Heart left ventricle (tissue), 16 donors: ENCODE measurements at regions of chr14 and their contacts with region 1.

Region 1: GRCh38 chr14:103104654-103105452 is 10.3 kb downstream of the EXOC3L4 start:
- DNase-seq: peak; percentile 64 to 88 (median 68)
- ATAC-seq: peak; percentile 69 to 81 (median 76)
- H3K4me3 ChIP-seq: no peak overlapping the region
- H3K27ac ChIP-seq: no peak overlapping the region
- H3K4me1 ChIP-seq: peaks cover 0 to 35% (median 24%) of the 10 kb centered on the region in 12 donors
- H3K27me3 ChIP-seq: peaks cover 17 to 54% (median 43%) of the 10 kb centered on the region in 9 donors
- CTCF ChIP-seq: peak; percentile 88 to 98 (median 94)
- POLR2A ChIP-seq: peak in 1 of 2 donors; percentile 17

Region 2: GRCh38 chr14:103141119-103141796 is 36.4 kb after region 1 on chr14:
- intact Hi-C with region 1: loop called in 6 of 10 experiments (anchors 2 to 5 kb)
- DNase-seq: no peak
- ATAC-seq: no peak
- H3K4me3 ChIP-seq: no peak overlapping the region
- H3K27ac ChIP-seq: no peak overlapping the region
- H3K4me1 ChIP-seq: peaks cover 0 to 35% (median 16%) of the 10 kb centered on the region in 12 donors
- H3K27me3 ChIP-seq: peaks cover 0 to 29% (median 7%) of the 10 kb centered on the region in 9 donors
- CTCF ChIP-seq: peak; percentile 52 to 66 (median 58)
- POLR2A ChIP-seq: no peak